Activated CD4-positive, alpha-beta T cell treated with anti-CD3 and anti-CD28 coated beads for 36 hours (primary cell): ENCODE measurements at regions of chr3 and their contacts with region 1.

Region 1: GRCh38 chr3:32646761-32647160 is 38.2 kb upstream of the CNOT10 start:
- DNase-seq: no peak
- ATAC-seq: no peak
- H3K4me3 Mint-ChIP-seq: no peak overlapping the region
- H3K27ac Mint-ChIP-seq: no peak overlapping the region
- H3K4me1 Mint-ChIP-seq: no peaks in the 10 kb centered on the region
- H3K27me3 Mint-ChIP-seq: no peaks in the 10 kb centered on the region

Region 2: DNA sequence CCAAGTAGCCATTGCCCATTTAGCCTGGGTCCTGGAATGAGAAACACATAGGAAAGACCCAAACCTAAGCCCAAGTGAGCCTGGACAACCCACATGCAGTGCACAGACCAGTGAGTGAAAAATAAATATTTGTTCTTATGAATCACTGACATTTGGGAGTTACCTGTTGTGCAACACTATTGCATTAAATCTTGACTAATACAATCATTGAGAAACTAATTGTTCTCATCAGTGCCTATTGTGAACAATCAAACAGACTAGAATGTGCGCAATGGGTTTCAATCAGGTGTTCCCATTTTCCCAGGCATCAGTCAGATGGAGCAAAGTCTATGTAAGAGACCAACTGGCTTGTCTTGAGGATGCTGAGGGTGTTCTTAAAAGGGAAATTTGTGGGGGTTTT is 16.5 kb before region 1 on chr3:
- CTCF ChIA-PET with region 1: no interaction called
- POLR2A ChIA-PET with region 1: no interaction called
- intact Hi-C with region 1: loop called in 1 of 2 experiments (anchors 2 kb)
- DNase-seq: no peak
- ATAC-seq: no peak
- H3K4me3 Mint-ChIP-seq: no peak overlapping the region
- H3K27ac Mint-ChIP-seq: no peak overlapping the region
- H3K4me1 Mint-ChIP-seq: no peaks in the 10 kb centered on the region
- H3K27me3 Mint-ChIP-seq: peaks cover 5% of the 10 kb centered on the region